ENCODE measurements at regions of chrX and their contacts with region 1.

Region 1: DNA sequence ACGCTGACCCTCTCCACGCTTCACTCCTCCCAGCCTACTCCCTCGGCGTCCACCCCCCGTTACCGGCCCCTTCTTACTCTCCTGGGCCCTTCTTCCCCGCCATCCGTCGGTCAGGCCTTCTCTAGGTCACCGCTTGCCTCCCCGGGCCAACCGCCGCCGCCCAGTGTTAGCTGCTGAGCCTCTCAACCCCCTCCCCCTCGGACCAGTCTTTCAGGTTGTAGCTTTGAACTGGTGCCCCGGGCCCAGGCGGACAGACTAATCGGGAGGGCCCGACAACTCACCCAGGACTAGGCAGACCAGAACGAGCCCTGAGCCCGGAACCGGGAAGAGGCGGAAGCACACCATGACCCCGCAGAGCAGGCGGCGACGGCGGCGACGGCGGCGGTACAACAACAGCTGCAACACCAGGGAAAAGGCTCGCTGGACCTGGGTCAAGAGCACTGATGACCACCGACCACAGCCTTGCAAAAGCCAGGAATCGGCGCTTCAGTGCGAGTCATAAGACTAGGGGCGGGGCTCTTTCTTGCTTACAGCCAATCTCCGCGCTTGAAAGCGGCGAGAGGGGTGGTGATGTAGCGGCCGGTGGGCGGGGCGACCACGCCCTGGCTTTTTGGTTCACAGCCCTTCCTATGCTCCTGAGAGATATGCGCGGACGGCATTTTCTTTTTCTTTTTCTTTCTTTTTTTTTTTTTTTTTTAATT is at the start of gene LAMP2:
- DNase-seq: peak; percentile 89
- ATAC-seq: peak; percentile 97
- H3K4me3 Mint-ChIP-seq: peak within 1 kb of the TSS; percentile 95
- H3K27ac Mint-ChIP-seq: peak within 1 kb of the TSS; percentile 91
- H3K4me1 Mint-ChIP-seq: peaks cover 22% of the 10 kb centered on the region
- H3K27me3 Mint-ChIP-seq: no peaks in the 10 kb centered on the region
- total RNA-seq, gene LAMP2: 30.4 to 34.5 TPM

Region 2: DNA sequence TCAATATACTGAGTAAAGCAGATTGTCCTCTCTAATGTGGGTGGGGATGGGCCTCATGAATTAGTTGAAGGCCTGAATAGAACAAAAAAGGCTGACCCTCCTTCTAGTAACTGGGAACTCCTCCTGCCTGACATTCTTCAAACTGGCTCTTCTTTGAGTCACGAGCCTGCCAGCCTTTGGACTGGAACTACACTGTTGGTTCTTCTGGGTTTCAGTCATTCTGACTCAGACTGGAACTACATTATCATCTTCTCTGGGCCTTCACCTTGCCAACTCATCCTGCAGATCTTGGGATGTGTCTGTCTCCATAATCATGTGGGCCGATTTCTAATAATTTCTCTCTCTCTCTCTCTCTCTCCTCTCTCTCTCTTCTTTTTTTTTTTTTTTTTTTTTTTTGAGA is 1423.1 kb before region 1 on chrX:
- CTCF ChIA-PET with region 1: no interaction called
- POLR2A ChIA-PET with region 1: no interaction called
- intact Hi-C with region 1: no loop called
- DNase-seq: peak; percentile 7
- ATAC-seq: no peak
- H3K4me3 Mint-ChIP-seq: no peak overlapping the region
- H3K27ac Mint-ChIP-seq: no peak overlapping the region
- H3K4me1 Mint-ChIP-seq: no peaks in the 10 kb centered on the region
- H3K27me3 Mint-ChIP-seq: peaks cover 7% of the 10 kb centered on the region

Region 3: GRCh38 chrX:120250522-120251271 is 218.3 kb before region 1 on chrX and contains the start of gene ZBTB33:
- CTCF ChIA-PET with region 1: no interaction called
- POLR2A ChIA-PET with region 1: no interaction called
- intact Hi-C with region 1: loop called (anchors 2 to 5 kb)
- DNase-seq: peak; percentile 92
- ATAC-seq: peak; percentile 99
- H3K4me3 Mint-ChIP-seq: peak within 1 kb of the TSS; percentile 94
- H3K27ac Mint-ChIP-seq: peak within 1 kb of the TSS; percentile 92
- H3K4me1 Mint-ChIP-seq: peaks cover 22% of the 10 kb centered on the region
- H3K27me3 Mint-ChIP-seq: no peaks in the 10 kb centered on the region
- total RNA-seq, gene ZBTB33: 14.5 to 14.6 TPM

Region 4: GRCh38 chrX:120308959-120309872 is 159.8 kb before region 1 on chrX:
- CTCF ChIA-PET with region 1: no interaction called
- POLR2A ChIA-PET with region 1: no interaction called
- intact Hi-C with region 1: loop called in 1 of 2 experiments (anchors 5 kb)
- DNase-seq: peak; percentile 81
- ATAC-seq: peak; percentile 94
- H3K4me3 Mint-ChIP-seq: peak overlapping the region; percentile 77
- H3K27ac Mint-ChIP-seq: peak overlapping the region; percentile 42
- H3K4me1 Mint-ChIP-seq: peaks cover 17% of the 10 kb centered on the region
- H3K27me3 Mint-ChIP-seq: peaks cover 16% of the 10 kb centered on the region

Region 5: DNA sequence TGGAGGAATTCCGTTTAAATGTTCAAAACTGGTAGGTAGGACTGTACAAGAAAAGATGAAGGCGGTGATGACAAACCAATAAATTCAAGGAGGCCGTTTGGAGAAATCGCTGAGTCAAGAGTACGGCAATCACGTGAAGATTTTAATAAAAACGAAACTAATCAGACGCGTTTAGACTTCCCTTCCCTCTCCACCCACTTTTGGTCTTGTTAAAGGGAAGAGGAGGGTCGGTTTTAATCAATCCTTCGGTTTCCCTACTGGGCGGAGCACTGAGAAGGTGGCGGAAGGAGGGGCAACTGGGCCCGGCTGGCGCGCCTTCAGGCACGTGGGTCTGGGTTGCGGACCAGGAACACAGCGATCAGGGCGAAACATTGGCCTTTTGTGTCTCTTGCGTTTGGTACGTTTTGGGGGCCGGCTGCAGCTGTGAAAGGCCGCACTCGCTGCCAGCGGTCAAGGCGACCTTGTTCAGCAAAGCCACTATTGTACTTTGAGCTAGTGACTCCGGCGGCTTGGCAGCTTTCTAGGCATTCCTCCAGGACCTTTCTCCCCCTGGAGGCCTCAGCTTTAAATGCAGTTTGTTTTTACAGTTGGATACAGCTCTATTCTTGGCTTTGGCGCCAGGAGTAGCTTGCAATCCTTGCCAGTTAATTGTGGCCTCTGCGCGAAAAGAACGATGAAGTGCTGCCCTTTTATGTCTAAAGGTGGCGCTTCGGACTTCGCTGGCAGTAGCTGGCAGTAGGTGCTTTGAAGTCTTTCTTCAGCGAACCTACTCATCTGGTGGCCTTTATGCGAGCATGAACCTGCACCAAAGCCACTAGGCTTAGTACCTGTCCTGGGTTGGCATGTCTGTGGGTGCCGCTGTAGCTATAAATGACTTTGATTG is 16.9 kb after region 1 on chrX:
- CTCF ChIA-PET with region 1: interaction called, 4 read pairs
- POLR2A ChIA-PET with region 1: interaction called, 9 read pairs
- intact Hi-C with region 1: loop called in 1 of 2 experiments (anchors 1 kb)
- DNase-seq: peak; percentile 64
- ATAC-seq: peak; percentile 82
- H3K4me3 Mint-ChIP-seq: peak overlapping the region; percentile 66
- H3K27ac Mint-ChIP-seq: peak overlapping the region; percentile 87
- H3K4me1 Mint-ChIP-seq: peaks cover 22% of the 10 kb centered on the region
- H3K27me3 Mint-ChIP-seq: no peaks in the 10 kb centered on the region

Measured in activated CD4-positive, alpha-beta T cell treated with anti-CD3 and anti-CD28 coated beads for 36 hours (primary cell).